Astrocyte of the cerebellum (primary cell): ENCODE measurements at regions of chr6 and their contacts with region 1.

Region 1: DNA sequence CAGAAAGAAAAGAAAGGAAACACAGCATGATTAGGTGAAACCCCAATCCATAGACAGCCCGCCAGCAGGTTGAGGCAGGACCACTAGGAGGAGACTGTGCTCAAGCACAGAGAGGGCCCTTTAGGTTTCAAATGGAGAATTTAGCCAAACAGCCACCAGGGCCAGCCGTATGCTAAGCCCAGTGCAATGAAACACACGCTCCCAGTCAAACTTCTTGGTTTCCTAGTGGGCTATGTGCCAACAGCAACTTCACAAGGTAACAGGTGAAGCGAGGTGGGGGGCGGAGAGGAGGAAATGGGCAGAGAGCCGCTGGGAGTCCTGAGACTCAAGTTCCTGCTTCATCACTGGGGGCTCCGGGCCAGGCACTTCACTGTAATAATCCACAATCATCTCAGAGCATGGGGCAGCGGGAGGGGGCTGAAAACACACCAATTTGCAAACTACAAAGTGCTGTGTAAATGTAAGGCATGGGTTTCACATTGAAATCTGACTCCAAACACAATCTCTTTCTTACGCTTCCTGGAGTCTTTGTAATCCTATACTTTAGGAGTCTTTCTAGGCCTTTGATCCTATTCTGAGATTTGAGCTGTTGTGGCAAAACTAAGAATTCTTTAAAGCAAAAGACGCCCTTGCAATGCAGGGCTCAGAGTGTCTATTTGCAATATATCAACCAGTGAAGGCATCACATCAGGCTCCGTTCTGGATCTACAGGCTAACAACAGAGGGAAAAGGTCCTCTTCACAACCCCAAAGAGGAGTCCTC is 117.3 kb downstream of the OPRM1 start:
- DNase-seq: no peak
- H3K4me3 ChIP-seq: no peak overlapping the region
- CTCF ChIP-seq: peak; percentile 78

Region 2: DNA sequence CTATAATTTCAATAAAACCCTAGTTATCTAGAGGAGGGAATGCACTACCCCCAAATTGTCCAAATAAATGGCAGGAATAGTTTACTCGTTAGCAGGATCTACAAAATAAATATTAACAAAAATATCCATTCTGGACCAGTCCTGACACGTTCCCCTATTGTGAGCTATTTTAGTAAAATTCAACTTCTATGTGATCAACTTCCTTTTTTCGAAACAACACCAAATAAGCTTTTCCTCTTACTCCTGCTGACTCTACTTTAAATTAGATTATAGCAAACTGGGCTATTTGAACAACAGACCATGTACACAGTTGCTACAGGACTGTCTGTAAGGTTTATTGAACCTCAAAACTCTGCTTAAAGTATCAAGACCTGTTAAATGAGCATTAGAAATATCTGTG is 46.0 kb after region 1 on chr6:
- in situ Hi-C with region 1: no loop called
- DNase-seq: no peak
- H3K4me3 ChIP-seq: no peak overlapping the region
- CTCF ChIP-seq: no peak

Region 3: DNA sequence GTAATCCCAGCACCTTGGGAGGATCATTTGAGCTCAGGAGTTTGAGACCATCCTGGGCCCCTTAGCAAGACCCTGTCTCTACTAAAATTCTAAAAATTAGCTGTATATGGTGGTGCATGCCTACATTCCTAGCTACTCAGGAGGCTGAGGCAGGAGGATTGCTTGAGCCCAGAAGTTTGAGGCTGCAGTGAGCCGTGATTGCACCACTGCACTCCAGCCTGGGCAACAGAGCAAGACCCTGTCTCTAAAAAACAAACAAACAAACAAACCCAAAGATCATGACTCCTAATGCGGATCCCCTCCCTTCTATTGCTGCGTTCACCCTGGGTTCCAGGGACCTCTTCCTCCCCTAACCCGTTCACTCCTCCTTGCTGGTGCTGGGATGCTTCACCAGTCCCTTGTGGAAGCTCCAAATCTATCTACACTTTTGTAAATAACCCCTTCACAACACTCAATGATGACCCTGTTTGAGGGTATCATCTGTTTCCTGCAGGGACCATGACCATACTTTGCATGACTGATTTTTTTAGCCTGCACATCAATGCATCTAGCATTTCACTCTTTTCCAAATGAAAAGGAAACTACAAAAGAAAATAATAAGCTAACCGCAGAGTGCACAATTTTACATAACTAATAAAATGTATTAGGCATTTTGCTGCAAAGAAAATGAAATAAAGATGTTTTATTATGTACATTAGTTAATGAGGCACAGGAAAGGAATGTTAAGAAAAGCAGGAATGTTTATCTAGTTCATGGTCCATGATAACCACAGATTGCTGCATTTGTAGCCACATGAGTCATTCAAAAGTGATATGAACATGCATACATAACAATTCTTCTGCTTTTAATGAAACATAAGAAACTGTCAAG is 230.8 kb after region 1 on chr6:
- in situ Hi-C with region 1: loop called (anchors 25 kb)
- DNase-seq: peak; percentile 84
- H3K4me3 ChIP-seq: no peak overlapping the region
- CTCF ChIP-seq: no peak